Motor neuron (in vitro differentiated cells): ENCODE measurements at regions of chr7 and their contacts with region 1.

Region 1: GRCh38 chr7:151172273-151173141 is 5.0 kb upstream of the GBX1 start:
- ATAC-seq: peak; percentile 11 to 81 (median 48)
- H3K4me3 ChIP-seq: no peak overlapping the region
- H3K27ac ChIP-seq: no peak overlapping the region
- H3K4me1 ChIP-seq: no peaks in the 10 kb centered on the region

Region 2: DNA sequence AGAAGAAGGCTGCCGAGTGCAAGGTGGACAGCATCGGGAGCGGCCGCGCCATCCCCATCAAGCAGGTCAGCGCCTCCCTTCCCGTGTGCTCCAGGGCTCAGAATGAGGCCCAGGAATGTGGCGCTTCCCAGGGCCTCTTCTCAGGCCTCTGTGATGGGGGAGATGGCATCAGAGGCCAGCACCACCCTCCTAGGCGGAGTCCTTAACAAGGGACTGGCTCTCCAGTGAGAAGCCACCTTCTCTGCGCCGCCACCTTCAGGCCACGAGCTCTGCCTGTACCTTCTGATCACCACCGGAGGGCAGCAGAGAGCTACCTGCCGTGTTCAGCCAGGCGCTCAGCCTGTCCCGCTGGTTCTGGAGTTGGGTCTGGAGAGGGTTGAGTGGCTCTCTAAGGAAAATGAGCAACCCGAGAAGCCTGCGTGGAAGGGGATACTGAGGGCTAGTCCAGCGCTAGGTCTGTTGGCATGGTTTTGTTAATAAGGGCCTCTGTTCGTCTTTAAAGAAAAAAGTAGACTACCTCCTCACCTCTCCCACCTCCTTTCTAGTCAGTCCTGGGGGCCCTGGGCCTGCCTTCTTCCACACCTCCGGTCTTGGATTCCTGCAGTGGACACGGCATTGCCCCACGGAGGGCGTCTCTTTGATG is 48.6 kb before region 1 on chr7:
- in situ Hi-C with region 1: loop called in 1 of 9 experiments (anchors 10 kb)
- ATAC-seq: peak; percentile 49 to 78 (median 69)
- H3K4me3 ChIP-seq: no peak overlapping the region
- H3K27ac ChIP-seq: no peak overlapping the region
- H3K4me1 ChIP-seq: peaks cover 14 to 21% of the 10 kb centered on the region in 2 donors